K562 (cell line): ENCODE measurements at regions of chr4 and their contacts with region 1.

Region 1: GRCh38 chr4:183398227-183399125 is 46.0 kb upstream of the CDKN2AIP start:
- DNase-seq: peak; percentile 80 to 86 (median 82)
- ATAC-seq: peak; percentile 94
- H3K4me3 ChIP-seq: peak overlapping the region; percentile 20; the same call in 1 of the 2 replicates
- H3K27ac ChIP-seq: peak overlapping the region; percentile 84
- H3K4me1 ChIP-seq: peaks cover 34 to 51% of the 10 kb centered on the region in 2 experiments
- H3K27me3 ChIP-seq: no peaks in the 10 kb centered on the region
- CTCF ChIP-seq: peak; percentile 67 to 76 (median 76)
- EP300 ChIP-seq: no peak
- POLR2A ChIP-seq: peak; percentile 75
- RAD21 ChIP-seq: peak; percentile 46 to 53

Region 2: DNA sequence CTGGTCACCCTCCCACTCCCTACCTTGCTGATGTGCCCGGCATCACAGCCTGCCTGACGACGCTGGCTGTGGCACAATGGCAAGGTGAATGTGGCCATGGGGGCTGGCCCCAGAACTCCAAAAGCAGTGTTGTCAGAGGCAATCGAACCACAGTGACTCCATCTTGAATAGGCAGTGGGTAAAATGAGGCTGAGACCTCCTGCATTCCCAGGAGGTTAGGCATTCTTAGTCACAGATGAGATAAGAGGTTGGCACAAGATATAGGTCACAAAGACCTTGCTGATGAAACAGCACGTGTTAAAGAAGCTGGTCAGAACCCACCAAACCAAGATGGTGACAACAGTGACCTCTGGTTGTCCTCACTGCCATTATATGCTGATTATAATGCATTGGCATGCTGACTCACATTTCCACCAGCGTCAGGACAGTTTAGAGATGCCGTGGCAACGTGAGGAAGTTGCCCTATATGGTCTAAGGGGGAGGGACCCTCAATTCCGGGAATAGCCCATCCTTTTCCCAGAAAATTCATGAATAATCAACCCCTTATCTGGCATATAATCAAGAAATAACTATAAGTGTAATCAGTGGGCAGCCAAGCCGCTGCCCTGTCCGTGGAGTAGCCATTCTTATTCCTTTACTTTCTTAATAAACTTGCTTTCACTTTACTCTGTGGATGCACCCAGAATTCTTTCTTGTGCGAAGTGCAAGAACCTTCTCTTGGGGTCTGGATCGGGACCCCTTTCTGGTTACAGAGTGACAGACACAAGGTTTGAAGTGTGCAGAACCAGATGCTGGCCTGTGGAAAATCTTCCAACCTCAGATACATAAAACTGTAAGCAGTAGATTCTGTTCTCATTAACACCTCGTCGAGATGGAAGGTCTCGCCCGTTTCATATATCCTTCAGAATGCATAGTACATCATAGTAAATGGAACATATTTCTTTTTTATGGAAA is 49.5 kb before region 1 on chr4:
- CTCF ChIA-PET with region 1: no interaction called
- POLR2A ChIA-PET with region 1: interaction called, 3 read pairs
- in situ Hi-C with region 1: no loop called
- intact Hi-C with region 1: loop called (anchors 1 kb)
- DNase-seq: peak; percentile 64 to 83 (median 74)
- ATAC-seq: peak; percentile 85
- H3K4me3 ChIP-seq: no peak overlapping the region
- H3K27ac ChIP-seq: peak overlapping the region; percentile 83
- H3K4me1 ChIP-seq: peaks cover 10 to 22% of the 10 kb centered on the region in 2 experiments; a peak in 4 of 5 replicates
- H3K27me3 ChIP-seq: no peaks in the 10 kb centered on the region
- CTCF ChIP-seq: no peak
- EP300 ChIP-seq: peak; percentile 77
- POLR2A ChIP-seq: peak; percentile 76
- RAD21 ChIP-seq: peak in 1 of 2 experiments; percentile 46; a peak in 2 of 4 replicates

Region 3: GRCh38 chr4:183362916-183363542 is 35.4 kb before region 1 on chr4:
- CTCF ChIA-PET with region 1: no interaction called
- POLR2A ChIA-PET with region 1: no interaction called
- in situ Hi-C with region 1: no loop called
- intact Hi-C with region 1: loop called (anchors 5 kb)
- DNase-seq: peak in 1 of 4 experiments; percentile 31
- ATAC-seq: peak; percentile 68
- H3K4me3 ChIP-seq: no peak overlapping the region
- H3K27ac ChIP-seq: no peak overlapping the region
- H3K4me1 ChIP-seq: peaks cover 6 to 12% of the 10 kb centered on the region in 2 experiments; a peak in 3 of 5 replicates
- H3K27me3 ChIP-seq: no peaks in the 10 kb centered on the region
- CTCF ChIP-seq: peak; percentile 33 to 46 (median 40); a peak in 3 of 6 replicates
- EP300 ChIP-seq: no peak
- POLR2A ChIP-seq: no peak
- RAD21 ChIP-seq: peak in 1 of 2 experiments; percentile 26; a peak in 1 of 4 replicates